CD4-positive, alpha-beta memory T cell (primary cell): ENCODE measurements at regions of chr16 and their contacts with region 1.

Region 1: GRCh38 chr16:23556881-23557778 is at the starts of genes EARS2 and UBFD1:
- DNase-seq: peak; percentile 94 to 97 (median 96)
- H3K4me3 ChIP-seq: peak within 1 kb of the TSS; percentile 90 to 95
- H3K4me3 Mint-ChIP-seq: peak within 1 kb of the TSS; percentile 90 to 96 (median 94)
- H3K27ac ChIP-seq: peak within 1 kb of the TSS; percentile 86
- H3K27ac Mint-ChIP-seq: peak within 1 kb of the TSS; percentile 95 to 98 (median 97)
- H3K4me1 ChIP-seq: peaks cover 36% of the 10 kb centered on the region
- H3K4me1 Mint-ChIP-seq: peaks cover 19 to 42% (median 31%) of the 10 kb centered on the region in 4 donors
- H3K27me3 ChIP-seq: no peaks in the 10 kb centered on the region
- H3K27me3 Mint-ChIP-seq: no peaks in the 10 kb centered on the region
- total RNA-seq, gene EARS2: 13.6 to 16.0 TPM
- total RNA-seq, gene UBFD1: 41.0 to 41.2 TPM

Region 2: DNA sequence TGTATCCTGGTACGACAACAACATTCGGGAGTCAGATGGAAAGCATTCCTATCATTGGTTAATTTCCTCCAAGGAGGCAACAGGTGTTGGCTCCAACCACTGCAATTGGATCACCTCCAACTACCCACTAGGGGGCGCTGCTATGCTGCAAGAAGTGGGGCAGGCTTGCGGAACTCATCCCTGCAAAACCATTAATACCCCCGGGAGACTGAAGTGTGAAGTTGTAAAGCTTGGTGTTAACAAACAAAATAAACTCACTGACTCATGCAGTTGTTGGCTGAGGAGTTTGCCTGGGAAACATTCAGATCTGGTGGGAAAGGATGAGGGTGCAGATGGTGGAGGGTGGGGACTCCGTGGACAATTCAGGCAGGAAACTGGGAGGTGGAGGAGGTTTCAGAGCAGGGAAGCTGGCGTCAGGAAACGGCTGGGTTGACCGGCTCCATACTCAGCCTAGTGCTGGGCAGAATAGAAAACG is 658.2 kb before region 1 on chr16:
- CTCF ChIA-PET with region 1: no interaction called
- POLR2A ChIA-PET with region 1: no interaction called
- intact Hi-C with region 1: no loop called
- DNase-seq: peak in 3 of 5 donors; percentile 5 to 12 (median 6)
- H3K4me3 ChIP-seq: no peak overlapping the region
- H3K4me3 Mint-ChIP-seq: no peak overlapping the region
- H3K27ac ChIP-seq: no peak overlapping the region
- H3K27ac Mint-ChIP-seq: no peak overlapping the region
- H3K4me1 ChIP-seq: no peaks in the 10 kb centered on the region
- H3K4me1 Mint-ChIP-seq: no peaks in the 10 kb centered on the region
- H3K27me3 ChIP-seq: peaks cover 4% of the 10 kb centered on the region
- H3K27me3 Mint-ChIP-seq: peaks cover 13 to 18% of the 10 kb centered on the region in 2 donors

Region 3: DNA sequence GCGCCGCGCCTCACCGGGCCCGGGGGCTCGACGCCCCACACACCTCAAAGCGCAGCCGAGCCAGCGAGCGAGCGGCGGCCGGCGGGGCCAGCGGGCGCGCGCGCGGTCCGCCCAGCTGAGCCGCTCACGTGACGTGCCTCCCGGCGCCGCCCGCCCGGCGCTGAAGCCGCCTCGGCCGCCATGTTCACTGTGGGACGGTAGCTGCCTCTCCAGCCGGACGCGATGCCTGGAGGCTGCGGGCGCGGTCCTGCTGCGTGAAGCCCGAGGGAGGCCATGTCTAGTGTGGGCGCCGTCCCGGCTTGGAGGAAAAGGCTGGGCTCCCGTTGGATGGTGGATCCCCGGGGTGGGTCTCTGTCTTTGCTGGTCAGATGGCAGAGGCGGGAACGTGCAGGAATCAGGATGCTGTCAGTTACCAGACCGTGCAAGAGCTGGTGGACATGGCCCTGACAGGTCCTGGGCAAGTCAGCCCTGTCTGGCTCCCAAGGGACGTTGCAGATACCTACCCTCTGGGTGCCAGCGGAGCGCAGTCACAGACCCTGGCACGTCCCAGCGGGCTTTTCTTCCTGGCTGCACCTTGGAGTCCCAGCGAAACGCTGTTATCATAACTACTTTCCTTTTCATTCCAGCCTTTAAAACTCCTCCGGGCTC is 407.7 kb before region 1 on chr16 and contains the start of gene USP31:
- CTCF ChIA-PET with region 1: no interaction called
- POLR2A ChIA-PET with region 1: no interaction called
- intact Hi-C with region 1: loop called (anchors 2 kb)
- DNase-seq: peak; percentile 85 to 88 (median 87)
- H3K4me3 ChIP-seq: peak within 1 kb of the TSS; percentile 62 to 98
- H3K4me3 Mint-ChIP-seq: peak within 1 kb of the TSS; percentile 92 to 98 (median 96)
- H3K27ac ChIP-seq: peak within 1 kb of the TSS; percentile 35
- H3K27ac Mint-ChIP-seq: peak within 1 kb of the TSS; percentile 83 to 93 (median 89)
- H3K4me1 ChIP-seq: peaks cover 16% of the 10 kb centered on the region
- H3K4me1 Mint-ChIP-seq: peaks cover 8 to 26% (median 15%) of the 10 kb centered on the region in 4 donors
- H3K27me3 ChIP-seq: peaks cover 3% of the 10 kb centered on the region
- H3K27me3 Mint-ChIP-seq: no peaks in the 10 kb centered on the region
- total RNA-seq, gene USP31: 4.9 to 5.0 TPM

Region 4: GRCh38 chr16:23452572-23453337 is 104.4 kb before region 1 on chr16 and contains the start of gene COG7:
- CTCF ChIA-PET with region 1: no interaction called
- POLR2A ChIA-PET with region 1: interaction called, 6 read pairs
- intact Hi-C with region 1: loop called (anchors 1 kb)
- DNase-seq: peak; percentile 82 to 88 (median 83)
- H3K4me3 ChIP-seq: peak within 1 kb of the TSS; percentile 83 to 95
- H3K4me3 Mint-ChIP-seq: peak within 1 kb of the TSS; percentile 92 to 99 (median 98)
- H3K27ac ChIP-seq: peak within 1 kb of the TSS; percentile 64
- H3K27ac Mint-ChIP-seq: peak within 1 kb of the TSS; percentile 90 to 98 (median 95)
- H3K4me1 ChIP-seq: peaks cover 21% of the 10 kb centered on the region
- H3K4me1 Mint-ChIP-seq: peaks cover 24 to 53% (median 36%) of the 10 kb centered on the region in 4 donors
- H3K27me3 ChIP-seq: no peaks in the 10 kb centered on the region
- H3K27me3 Mint-ChIP-seq: no peaks in the 10 kb centered on the region
- total RNA-seq, gene COG7: 19.7 to 24.7 TPM

Region 5: DNA sequence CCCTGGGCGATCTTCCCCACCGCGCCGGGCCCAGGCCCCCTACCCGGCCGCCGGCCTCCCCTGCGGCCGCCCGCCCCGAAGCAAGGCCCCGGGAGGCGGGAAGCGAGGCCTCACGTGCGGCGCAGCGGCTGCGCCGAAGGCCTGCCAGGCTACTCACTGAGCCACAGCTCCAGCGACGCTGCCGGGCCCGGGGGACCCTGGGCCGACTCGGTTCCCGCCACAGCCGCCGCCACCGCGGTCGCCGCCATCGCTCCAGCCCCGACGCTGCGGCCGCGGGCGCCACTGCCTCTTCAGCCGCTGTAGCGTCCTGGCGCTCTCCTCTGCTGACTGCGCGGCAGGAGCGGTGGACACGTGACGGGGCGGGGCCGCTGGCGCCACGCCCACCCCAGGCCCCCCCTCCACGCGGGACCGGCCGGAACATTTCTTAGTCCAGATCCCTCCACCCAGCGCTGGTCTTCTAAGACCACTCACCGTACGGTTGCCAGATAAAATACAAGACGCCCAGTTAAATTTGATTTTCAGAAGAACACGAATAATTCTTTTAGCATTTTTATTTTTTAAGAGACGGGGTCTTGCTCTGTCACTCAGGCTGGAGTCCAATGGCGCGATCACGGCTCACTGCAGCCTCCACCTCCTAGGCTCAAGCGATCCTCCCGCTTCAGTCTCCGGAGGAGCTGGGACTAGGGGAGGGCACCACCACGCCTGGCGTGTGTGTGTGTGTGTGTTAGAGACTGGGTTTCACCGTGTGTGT is 46.8 kb before region 1 on chr16 and contains the start of gene GGA2:
- CTCF ChIA-PET with region 1: interaction called, 5 read pairs
- POLR2A ChIA-PET with region 1: interaction called, 19 read pairs
- intact Hi-C with region 1: loop called (anchors 1 kb)
- DNase-seq: peak; percentile 68 to 78 (median 73)
- H3K4me3 ChIP-seq: peak within 1 kb of the TSS; percentile 63 to 75
- H3K4me3 Mint-ChIP-seq: peak within 1 kb of the TSS; percentile 90 to 97 (median 94)
- H3K27ac ChIP-seq: peak within 1 kb of the TSS; percentile 61
- H3K27ac Mint-ChIP-seq: peak within 1 kb of the TSS; percentile 71 to 95 (median 90)
- H3K4me1 ChIP-seq: peaks cover 51% of the 10 kb centered on the region
- H3K4me1 Mint-ChIP-seq: peaks cover 44 to 78% (median 59%) of the 10 kb centered on the region in 4 donors
- H3K27me3 ChIP-seq: no peaks in the 10 kb centered on the region
- H3K27me3 Mint-ChIP-seq: no peaks in the 10 kb centered on the region
- total RNA-seq, gene GGA2: 114 to 118 TPM

Region 6: DNA sequence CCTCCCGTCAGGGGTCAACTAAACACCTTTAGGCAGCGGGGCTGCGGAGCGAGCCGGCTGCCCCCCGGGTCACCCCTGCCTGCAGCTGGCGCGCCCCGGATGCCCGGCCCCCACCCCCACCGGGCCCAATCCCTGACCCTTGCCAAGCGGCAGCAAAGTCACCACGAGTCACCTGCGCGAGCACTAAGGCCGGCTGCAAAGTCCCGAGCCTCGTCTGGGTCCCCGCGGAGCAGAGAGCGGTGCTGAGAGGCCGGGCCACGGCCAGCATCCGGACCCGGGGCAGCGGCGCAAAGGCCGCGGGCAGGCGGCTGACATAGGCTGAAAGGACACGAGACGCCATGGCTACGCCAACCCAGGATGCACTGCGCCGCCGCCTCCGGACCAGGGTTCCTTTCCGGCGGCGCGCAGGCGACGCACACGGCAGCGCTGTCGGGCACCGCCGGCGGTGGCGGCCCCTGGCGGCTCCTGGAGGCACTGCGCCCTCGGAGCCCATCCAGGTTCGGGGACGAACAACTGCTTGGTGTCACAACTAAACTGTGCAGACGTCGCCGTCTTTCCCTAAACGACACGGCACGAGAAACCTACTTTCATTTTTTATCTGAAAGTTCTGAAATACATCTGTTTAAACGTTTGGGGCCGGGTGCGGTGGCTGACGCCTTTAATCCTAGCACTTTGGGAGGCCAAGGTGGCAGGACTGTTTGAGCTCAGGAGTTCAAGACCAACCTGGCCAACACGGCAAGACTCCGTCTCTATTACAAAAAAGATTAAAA is 39.0 kb after region 1 on chr16 and contains the start of gene NDUFAB1:
- CTCF ChIA-PET with region 1: interaction called, 11 read pairs
- POLR2A ChIA-PET with region 1: interaction called, 4 read pairs
- intact Hi-C with region 1: loop called (anchors 1 kb)
- DNase-seq: peak; percentile 87 to 89 (median 88)
- H3K4me3 ChIP-seq: peak within 1 kb of the TSS; percentile 81 to 91
- H3K4me3 Mint-ChIP-seq: peak within 1 kb of the TSS; percentile 79 to 90 (median 86)
- H3K27ac ChIP-seq: peak within 1 kb of the TSS; percentile 84
- H3K27ac Mint-ChIP-seq: peak within 1 kb of the TSS; percentile 77 to 91 (median 89)
- H3K4me1 ChIP-seq: peaks cover 16% of the 10 kb centered on the region
- H3K4me1 Mint-ChIP-seq: peaks cover 14 to 47% (median 28%) of the 10 kb centered on the region in 4 donors
- H3K27me3 ChIP-seq: no peaks in the 10 kb centered on the region
- H3K27me3 Mint-ChIP-seq: no peaks in the 10 kb centered on the region
- total RNA-seq, gene NDUFAB1: 45.4 to 45.7 TPM

Region 7: GRCh38 chr16:23615805-23616204 is 58.7 kb after region 1 on chr16:
- CTCF ChIA-PET with region 1: no interaction called
- POLR2A ChIA-PET with region 1: no interaction called
- intact Hi-C with region 1: no loop called
- DNase-seq: no peak
- H3K4me3 ChIP-seq: no peak overlapping the region
- H3K4me3 Mint-ChIP-seq: no peak overlapping the region
- H3K27ac ChIP-seq: no peak overlapping the region
- H3K27ac Mint-ChIP-seq: no peak overlapping the region
- H3K4me1 ChIP-seq: no peaks in the 10 kb centered on the region
- H3K4me1 Mint-ChIP-seq: no peaks in the 10 kb centered on the region
- H3K27me3 ChIP-seq: no peaks in the 10 kb centered on the region
- H3K27me3 Mint-ChIP-seq: no peaks in the 10 kb centered on the region

Region 8: GRCh38 chr16:23640931-23641765 is 84.0 kb after region 1 on chr16 and contains the starts of genes DCTN5 and PALB2:
- CTCF ChIA-PET with region 1: no interaction called
- POLR2A ChIA-PET with region 1: interaction called, 4 read pairs
- intact Hi-C with region 1: loop called (anchors 1 kb)
- DNase-seq: peak; percentile 78 to 86 (median 80)
- H3K4me3 ChIP-seq: peak within 1 kb of the TSS; percentile 82 to 100
- H3K4me3 Mint-ChIP-seq: peak within 1 kb of the TSS; percentile 98 to 100 (median 99)
- H3K27ac ChIP-seq: peak within 1 kb of the TSS; percentile 85
- H3K27ac Mint-ChIP-seq: peak within 1 kb of the TSS; percentile 96 to 99 (median 98)
- H3K4me1 ChIP-seq: peaks cover 20% of the 10 kb centered on the region
- H3K4me1 Mint-ChIP-seq: peaks cover 24 to 49% (median 37%) of the 10 kb centered on the region in 4 donors
- H3K27me3 ChIP-seq: no peaks in the 10 kb centered on the region
- H3K27me3 Mint-ChIP-seq: no peaks in the 10 kb centered on the region
- total RNA-seq, gene DCTN5: 55.8 to 60.2 TPM
- total RNA-seq, gene PALB2: 12.4 to 15.0 TPM